A549 (cell line): ENCODE measurements at regions of chr12 and their contacts with region 1.

Region 1: DNA sequence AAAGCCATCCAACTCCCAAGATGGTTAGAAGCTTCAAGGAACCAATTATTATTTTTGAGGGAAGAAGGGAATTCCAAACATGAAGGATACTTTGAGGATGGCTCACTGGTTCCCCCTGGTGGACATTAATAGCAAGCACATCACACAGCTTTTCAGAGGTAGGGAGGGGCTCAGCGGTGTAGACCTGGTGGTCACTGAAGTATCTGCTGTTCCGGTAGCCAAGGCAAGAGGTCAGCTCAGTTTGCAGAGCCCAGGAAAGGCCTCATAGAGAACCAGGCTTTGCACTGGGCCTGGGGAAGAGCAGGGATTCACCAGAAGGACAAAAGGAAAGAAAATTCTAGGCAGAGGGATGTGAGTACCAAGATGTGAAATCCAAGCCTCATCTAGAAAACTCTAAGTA is 118.7 kb downstream of the KSR2 start:
- DNase-seq: peak; percentile 77 to 80
- ATAC-seq: peak; percentile 67 to 87
- H3K4me3 ChIP-seq: no peak overlapping the region
- H3K27ac ChIP-seq: peak overlapping the region; percentile 14 to 45; a peak in 3 of 6 replicates
- H3K4me1 ChIP-seq: peaks cover 12% of the 10 kb centered on the region
- CTCF ChIP-seq: peak; percentile 89
- EP300 ChIP-seq: no peak
- POLR2A ChIP-seq: no peak
- RAD21 ChIP-seq: peak; percentile 77 to 84

Region 2: GRCh38 chr12:117202556-117202955 is 647.5 kb before region 1 on chr12:
- CTCF ChIA-PET with region 1: interaction called, 287 read pairs
- POLR2A ChIA-PET with region 1: no interaction called
- DNase-seq: no peak
- ATAC-seq: no peak
- H3K4me3 ChIP-seq: no peak overlapping the region
- H3K27ac ChIP-seq: no peak overlapping the region
- H3K4me1 ChIP-seq: no peaks in the 10 kb centered on the region
- CTCF ChIP-seq: no peak
- EP300 ChIP-seq: no peak
- POLR2A ChIP-seq: no peak
- RAD21 ChIP-seq: no peak

Region 3: DNA sequence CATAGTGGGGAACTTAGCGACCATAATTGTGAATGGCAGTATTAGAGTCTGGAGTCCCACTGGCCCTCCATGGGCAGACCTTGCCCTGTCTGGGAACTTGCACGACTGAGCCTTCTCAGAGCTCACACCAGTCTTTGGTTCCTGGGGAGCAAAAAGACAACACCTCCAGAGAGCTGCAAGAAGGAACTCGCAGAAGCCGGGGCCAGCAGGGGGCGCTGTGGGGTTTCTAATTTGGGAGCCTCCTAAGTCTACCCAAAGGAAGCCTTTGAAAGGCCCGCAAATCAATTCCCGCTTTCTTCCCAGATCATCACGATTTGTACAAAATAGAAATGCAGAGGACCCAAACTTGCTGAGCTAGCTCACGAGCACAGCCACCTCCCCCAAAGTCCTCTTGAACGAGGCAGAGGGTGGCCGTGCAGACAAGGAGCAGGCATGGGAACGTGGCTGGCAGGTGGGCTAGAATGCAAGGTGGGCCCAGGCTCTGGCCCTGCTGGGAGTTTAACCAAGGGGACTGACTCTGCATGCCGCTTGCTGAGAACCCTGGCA is 613.5 kb before region 1 on chr12:
- CTCF ChIA-PET with region 1: interaction called, 20 read pairs
- POLR2A ChIA-PET with region 1: no interaction called
- DNase-seq: peak; percentile 69 to 82
- ATAC-seq: peak; percentile 91 to 95
- H3K4me3 ChIP-seq: no peak overlapping the region
- H3K27ac ChIP-seq: no peak overlapping the region
- H3K4me1 ChIP-seq: no peaks in the 10 kb centered on the region
- CTCF ChIP-seq: peak; percentile 88
- EP300 ChIP-seq: no peak
- POLR2A ChIP-seq: no peak
- RAD21 ChIP-seq: peak; percentile 88 to 89

Region 4: DNA sequence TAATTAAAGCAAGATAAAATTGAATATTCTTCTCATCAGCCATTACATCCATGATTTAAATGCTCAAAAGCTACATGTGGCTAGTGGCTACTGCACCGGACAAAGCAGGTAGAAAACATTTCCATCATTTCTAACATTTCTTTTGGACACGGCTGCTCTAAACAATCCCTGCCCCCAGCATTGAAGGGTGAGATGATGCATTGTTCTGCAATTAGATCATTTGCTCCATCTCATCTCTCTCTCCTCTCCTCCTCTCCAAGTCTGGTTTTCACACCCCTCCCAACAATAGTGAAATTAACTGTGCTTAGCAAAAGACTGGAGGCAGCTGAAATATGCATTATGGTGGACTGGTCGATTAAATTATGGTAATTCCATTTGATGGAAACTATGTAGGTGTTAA is 169.7 kb before region 1 on chr12:
- CTCF ChIA-PET with region 1: interaction called, 17 read pairs
- POLR2A ChIA-PET with region 1: no interaction called
- DNase-seq: no peak
- ATAC-seq: no peak
- H3K4me3 ChIP-seq: no peak overlapping the region
- H3K27ac ChIP-seq: peak overlapping the region; percentile 56 to 73; a peak in 4 of 6 replicates
- H3K4me1 ChIP-seq: peaks cover 38% of the 10 kb centered on the region
- CTCF ChIP-seq: no peak
- EP300 ChIP-seq: no peak
- POLR2A ChIP-seq: no peak
- RAD21 ChIP-seq: no peak

Region 5: DNA sequence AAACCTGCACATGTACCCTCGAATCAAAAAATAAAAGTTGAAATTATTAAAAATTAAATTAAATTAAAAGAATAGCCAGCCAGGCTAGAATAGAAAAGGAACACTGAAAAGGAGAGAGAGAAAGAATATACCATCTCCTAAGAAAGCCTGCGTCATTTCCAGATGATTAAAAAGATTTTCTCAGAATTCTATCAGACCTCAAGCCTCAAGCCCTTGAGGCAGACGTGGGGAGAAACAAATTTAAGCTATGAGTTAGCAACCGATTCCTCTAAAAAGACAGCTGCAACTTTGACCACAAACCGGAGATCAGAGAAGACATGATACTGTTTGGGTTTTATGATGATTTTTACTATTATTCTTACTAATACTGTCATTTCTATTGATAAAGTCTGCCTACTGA is 19.6 kb before region 1 on chr12:
- CTCF ChIA-PET with region 1: interaction called, 16 read pairs
- POLR2A ChIA-PET with region 1: no interaction called
- DNase-seq: no peak
- ATAC-seq: no peak
- H3K4me3 ChIP-seq: no peak overlapping the region
- H3K27ac ChIP-seq: no peak overlapping the region
- H3K4me1 ChIP-seq: peaks cover 10% of the 10 kb centered on the region
- CTCF ChIP-seq: no peak
- EP300 ChIP-seq: no peak
- POLR2A ChIP-seq: no peak
- RAD21 ChIP-seq: no peak